Right ventricle myocardium superior (tissue), 1 donor: ENCODE measurements at regions of chr12 and their contacts with region 1.

Region 1: GRCh38 chr12:14365294-14366208 is at the start of gene ATF7IP:
- DNase-seq: peak; percentile 96
- ATAC-seq: peak; percentile 97
- total RNA-seq, gene ATF7IP: 52.7 TPM

Region 2: DNA sequence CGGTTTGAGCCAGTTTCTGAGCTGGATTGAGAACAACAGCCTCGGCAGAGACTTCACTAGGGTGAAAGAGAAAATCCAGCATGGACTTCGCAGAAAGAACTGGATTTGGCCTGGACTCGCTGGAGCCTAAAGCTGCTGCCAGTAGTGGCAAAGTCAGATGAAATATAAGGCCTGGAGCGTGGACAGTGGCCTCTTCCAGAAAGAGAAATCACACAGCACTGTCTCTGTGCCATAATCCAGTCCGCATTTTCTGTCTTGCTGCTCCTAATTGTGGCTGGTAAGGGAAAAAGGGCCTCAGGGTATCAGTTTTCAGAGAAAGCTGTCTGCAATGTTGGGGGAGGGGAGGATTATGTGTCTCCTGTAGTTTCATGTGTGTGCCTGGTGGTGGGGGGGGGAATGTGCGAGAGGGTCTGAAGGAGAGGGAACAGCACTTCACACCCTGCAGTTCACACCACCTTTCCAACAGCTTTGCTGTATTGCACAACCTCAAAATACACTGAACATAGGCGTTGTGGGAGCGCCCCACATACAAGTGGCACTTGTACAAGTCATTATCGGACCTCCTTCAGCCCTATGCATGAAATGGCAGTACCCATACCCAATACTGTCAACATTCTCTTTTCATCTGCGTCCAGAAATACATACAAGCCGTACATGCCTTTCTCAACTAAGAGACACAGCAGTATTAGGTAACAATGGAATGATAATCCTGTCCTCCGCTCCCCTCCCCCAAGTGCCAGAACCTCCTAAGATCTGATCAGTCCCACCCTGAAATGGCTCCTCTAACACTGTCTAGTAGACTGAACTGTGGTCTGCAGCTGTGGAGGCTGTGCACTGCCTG is 107.6 kb before region 1 on chr12:
- intact Hi-C with region 1: loop called (anchors 5 kb)
- DNase-seq: no peak
- ATAC-seq: no peak

Region 3: GRCh38 chr12:14303661-14304155 is 61.8 kb before region 1 on chr12:
- intact Hi-C with region 1: no loop called
- DNase-seq: no peak
- ATAC-seq: no peak